ENCODE measurements at regions of chr20 and their contacts with region 1.

Region 1: DNA sequence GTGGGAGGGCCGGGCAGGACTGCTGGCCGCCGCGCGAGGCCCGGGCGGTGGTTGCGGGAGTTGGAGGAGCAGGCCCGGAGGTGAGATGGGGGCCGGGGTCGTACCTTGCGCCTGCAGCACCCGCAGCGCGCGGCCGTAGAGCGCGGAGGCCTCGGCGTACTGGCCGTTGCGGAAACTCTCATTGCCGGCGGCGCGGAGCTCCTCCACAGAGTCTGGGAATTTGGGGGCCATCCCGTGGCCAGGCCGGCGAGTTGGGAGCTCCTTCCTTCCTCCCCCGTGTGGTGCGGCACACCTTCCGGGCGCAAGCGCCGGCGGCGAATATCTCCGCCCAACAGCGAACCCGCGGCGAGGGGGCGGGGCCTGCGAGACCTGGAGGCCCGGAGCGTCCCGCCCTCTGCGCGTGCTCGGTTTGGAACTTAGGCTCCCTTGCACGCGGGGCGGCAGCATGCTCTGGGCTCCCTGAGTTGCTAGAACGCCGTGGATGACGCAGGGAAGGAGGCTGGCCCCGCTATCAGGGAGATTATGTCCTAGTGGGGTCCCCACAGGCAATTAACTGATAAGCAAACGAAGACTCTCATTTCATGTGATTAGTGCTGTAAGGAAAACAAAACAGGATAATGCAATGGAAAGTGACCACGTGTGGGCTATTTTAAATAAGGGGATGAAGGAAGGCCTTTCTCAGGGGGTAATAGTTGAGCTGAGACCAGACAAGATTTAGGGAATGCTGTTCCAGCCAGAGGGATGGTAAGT is at the start of gene TOMM34:
- DNase-seq: peak; percentile 94
- H3K4me3 Mint-ChIP-seq: peak within 1 kb of the TSS; percentile 99
- H3K27ac Mint-ChIP-seq: peak within 1 kb of the TSS; percentile 100
- H3K4me1 Mint-ChIP-seq: peaks cover 74% of the 10 kb centered on the region
- H3K27me3 Mint-ChIP-seq: no peaks in the 10 kb centered on the region
- total RNA-seq, gene TOMM34: 53.0 and 55.4 TPM in 2 replicates

Region 2: DNA sequence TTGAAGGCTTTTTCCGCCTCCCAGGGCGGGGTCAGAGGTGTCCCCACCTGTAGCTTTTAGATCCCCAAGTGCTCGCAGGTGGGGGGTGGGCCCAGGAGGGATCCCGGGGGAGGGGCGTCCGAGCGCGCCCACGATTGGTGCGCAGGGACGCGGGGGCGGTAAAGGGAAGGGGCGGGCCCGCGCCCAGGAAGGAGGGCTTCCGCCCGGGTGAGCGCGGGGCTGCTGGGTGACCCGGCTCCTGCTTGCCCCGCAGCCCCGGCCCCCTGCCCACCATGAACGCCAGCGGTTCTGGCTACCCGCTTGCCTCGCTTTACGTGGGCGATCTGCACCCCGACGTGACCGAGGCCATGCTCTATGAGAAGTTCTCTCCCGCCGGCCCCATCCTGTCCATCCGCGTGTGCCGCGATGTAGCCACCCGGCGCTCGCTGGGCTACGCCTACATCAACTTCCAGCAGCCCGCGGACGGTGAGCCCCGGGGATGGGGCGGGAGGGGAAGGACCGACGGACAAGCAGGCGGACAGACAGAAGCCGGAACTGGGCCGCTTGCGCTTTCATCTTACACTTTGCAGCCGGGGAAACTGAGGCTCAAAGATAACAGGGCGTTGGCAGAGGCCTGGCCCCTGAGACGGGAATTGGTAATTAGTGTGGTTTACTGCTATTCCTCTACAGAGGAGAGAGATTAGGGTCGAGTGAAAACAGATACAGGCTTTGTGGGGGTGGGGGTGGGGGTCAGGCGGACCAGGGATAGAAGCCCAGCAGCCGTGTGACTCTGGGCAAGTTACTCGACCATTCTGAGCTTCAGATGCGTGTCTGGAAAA is 50.2 kb before region 1 on chr20 and contains the start of gene PABPC1L:
- intact Hi-C with region 1: loop called (anchors 1 kb)
- DNase-seq: peak; percentile 72
- H3K4me3 Mint-ChIP-seq: peak within 1 kb of the TSS; percentile 87
- H3K27ac Mint-ChIP-seq: peak within 1 kb of the TSS; percentile 84
- H3K4me1 Mint-ChIP-seq: peaks cover 32% of the 10 kb centered on the region
- H3K27me3 Mint-ChIP-seq: no peaks in the 10 kb centered on the region
- total RNA-seq, gene PABPC1L: 101 and 106 TPM in 2 replicates

Region 3: DNA sequence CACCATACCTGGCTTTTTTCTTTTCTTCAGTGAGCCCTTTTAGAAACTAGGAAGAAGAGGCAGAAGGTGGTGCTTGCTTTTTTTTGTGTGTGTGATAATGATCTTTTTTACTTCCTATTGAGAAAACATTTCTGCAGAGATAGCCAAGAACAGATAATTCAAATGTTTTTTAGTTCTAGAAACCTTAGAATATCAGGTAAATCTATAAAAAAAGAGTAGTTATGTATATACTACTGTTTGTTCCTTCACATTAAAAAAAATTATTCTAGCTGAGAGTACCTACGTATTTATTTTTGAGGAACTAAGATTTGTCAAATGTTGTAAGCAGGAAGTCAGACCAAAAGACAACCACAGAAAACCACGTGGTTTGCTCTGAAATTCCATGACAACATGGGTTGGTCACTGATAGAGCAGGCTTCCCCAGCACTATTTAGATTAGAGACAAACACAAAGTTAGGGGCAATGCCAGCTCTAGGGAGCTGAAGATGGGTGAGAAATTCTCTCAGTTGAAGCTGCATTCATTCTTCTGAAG is 18.9 kb after region 1 on chr20:
- intact Hi-C with region 1: loop called (anchors 1 kb)
- DNase-seq: peak; percentile 67
- H3K4me3 Mint-ChIP-seq: peak overlapping the region; percentile 73
- H3K27ac Mint-ChIP-seq: peak overlapping the region; percentile 95
- H3K4me1 Mint-ChIP-seq: peaks cover 72% of the 10 kb centered on the region
- H3K27me3 Mint-ChIP-seq: no peaks in the 10 kb centered on the region

Region 4: GRCh38 chr20:44990425-44990824 is 30.1 kb after region 1 on chr20:
- intact Hi-C with region 1: loop called (anchors 1 kb)
- DNase-seq: no peak
- H3K4me3 Mint-ChIP-seq: peak overlapping the region; percentile 82
- H3K27ac Mint-ChIP-seq: peak overlapping the region; percentile 94
- H3K4me1 Mint-ChIP-seq: peaks cover 71% of the 10 kb centered on the region
- H3K27me3 Mint-ChIP-seq: no peaks in the 10 kb centered on the region